IMR-90 (cell line): ENCODE measurements at regions of chr12 and their contacts with region 1.

Region 1: DNA sequence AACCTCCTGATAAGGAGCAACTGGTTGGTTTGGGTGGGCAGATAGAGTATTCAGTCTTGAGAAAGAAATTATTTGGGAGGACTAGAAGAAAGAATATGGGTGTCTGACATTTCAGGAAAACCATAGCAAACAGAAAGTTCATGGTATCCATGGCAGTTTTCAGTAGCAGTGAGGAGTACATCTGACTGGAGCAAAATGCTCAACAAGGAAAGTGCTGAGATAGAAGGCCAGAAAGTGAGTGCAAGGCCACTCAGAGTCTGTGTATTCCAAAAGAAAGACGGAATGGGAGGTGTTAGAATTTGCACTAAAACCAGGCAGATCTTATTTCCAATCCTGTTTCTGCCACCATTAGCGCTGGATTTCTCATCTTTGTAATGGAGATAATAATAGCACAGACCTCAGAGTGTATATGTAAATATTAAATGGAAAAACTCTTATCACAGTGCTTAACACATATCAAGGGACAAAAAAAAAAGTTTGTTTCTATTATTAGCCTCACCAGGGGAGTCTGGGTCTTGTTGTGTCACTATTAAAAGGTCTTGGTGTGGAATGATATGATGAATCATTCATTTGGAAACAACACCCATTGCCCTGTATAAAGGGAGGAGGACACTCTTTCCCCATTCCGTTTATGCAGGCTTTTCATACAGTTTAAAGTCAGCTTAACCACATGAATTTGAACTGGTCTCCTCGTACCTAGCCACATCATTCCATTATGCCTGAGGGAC is 349.8 kb downstream of the IPO8 start:
- DNase-seq: no peak
- ATAC-seq: no peak
- H3K4me3 ChIP-seq: no peak overlapping the region
- H3K27ac ChIP-seq: no peak overlapping the region
- H3K4me1 ChIP-seq: no peaks in the 10 kb centered on the region
- H3K27me3 ChIP-seq: no peaks in the 10 kb centered on the region
- CTCF ChIP-seq: no peak
- POLR2A ChIP-seq: no peak
- RAD21 ChIP-seq: no peak

Region 2: DNA sequence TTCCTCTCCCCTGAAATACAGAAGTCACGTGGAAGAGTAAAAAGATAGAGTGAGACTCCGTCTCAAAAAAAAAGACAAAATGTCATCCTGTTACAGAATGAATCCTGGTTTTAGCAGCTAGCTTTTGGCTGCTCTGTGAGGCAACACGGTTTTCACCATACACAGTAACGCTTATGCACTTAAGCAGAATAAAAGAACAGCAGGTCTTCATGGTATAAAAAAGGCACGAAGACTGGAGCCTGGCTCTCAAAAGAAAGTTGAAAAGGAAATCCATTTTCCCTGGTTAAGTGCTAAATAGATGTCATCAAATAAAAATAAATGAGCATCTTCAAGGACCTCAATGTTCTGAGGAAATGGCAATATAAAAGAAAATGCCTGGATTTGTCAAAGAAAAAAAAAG is 94.4 kb before region 1 on chr12:
- CTCF ChIA-PET with region 1: no interaction called
- POLR2A ChIA-PET with region 1: no interaction called
- dilution Hi-C with region 1: no loop called
- in situ Hi-C with region 1: no loop called
- intact Hi-C with region 1: loop called (anchors 1 kb)
- DNase-seq: no peak
- ATAC-seq: no peak
- H3K4me3 ChIP-seq: no peak overlapping the region
- H3K27ac ChIP-seq: no peak overlapping the region
- H3K4me1 ChIP-seq: no peaks in the 10 kb centered on the region
- H3K27me3 ChIP-seq: no peaks in the 10 kb centered on the region
- CTCF ChIP-seq: no peak
- POLR2A ChIP-seq: no peak
- RAD21 ChIP-seq: no peak